Spleen (tissue), 13 donors: ENCODE measurements at regions of chr13 and their contacts with region 1.

Region 1: GRCh38 chr13:27868641-27869435 is 51.0 kb upstream of the PDX1 start:
- DNase-seq: no peak
- H3K4me3 ChIP-seq: no peak overlapping the region
- H3K27ac ChIP-seq: no peak overlapping the region
- H3K4me1 ChIP-seq: no peaks in the 10 kb centered on the region
- H3K27me3 ChIP-seq: peaks cover 0 to 79% (median 6%) of the 10 kb centered on the region in 7 donors
- CTCF ChIP-seq: peak in 7 of 11 experiments; percentile 28 to 44 (median 41)
- POLR2A ChIP-seq: no peak

Region 2: DNA sequence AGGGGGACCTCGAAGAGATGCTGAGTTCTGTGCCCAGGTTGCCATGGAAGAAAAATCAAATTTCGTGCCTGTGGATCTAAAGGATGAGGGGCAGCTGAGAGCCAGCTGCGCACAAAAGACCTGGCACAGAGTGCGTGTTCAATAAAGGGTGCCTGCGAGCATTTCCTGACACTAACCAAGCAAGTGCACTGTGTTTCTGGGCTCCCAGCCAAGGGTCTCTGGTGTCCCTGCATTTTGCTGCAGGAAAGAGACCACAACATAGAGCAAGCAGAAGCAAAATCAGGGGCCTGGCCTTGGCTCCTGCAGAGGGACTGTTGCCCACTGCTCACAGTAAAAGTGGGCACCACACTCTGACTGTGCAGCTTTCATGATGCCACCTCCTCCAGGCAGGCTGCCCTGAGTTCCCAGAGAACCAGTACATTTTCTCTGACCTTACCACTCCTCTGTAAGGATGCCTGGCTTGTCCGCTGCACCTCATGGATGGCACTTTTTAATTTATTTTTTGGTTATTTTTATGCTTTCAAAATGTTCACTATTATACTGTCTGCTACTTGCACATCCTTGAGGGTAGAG is 1037.4 kb before region 1 on chr13:
- intact Hi-C with region 1: no loop called
- DNase-seq: no peak
- H3K4me3 ChIP-seq: no peak overlapping the region
- H3K27ac ChIP-seq: no peak overlapping the region
- H3K4me1 ChIP-seq: no peaks in the 10 kb centered on the region
- H3K27me3 ChIP-seq: peaks cover 0 to 11% (median 0%) of the 10 kb centered on the region in 7 donors
- CTCF ChIP-seq: no peak
- POLR2A ChIP-seq: no peak

Region 3: GRCh38 chr13:27958941-27959815 is 90.3 kb after region 1 on chr13:
- intact Hi-C with region 1: loop called (anchors 5 kb)
- DNase-seq: no peak
- H3K4me3 ChIP-seq: no peak overlapping the region
- H3K27ac ChIP-seq: no peak overlapping the region
- H3K4me1 ChIP-seq: peaks cover 14 to 37% (median 23%) of the 10 kb centered on the region in 6 donors
- H3K27me3 ChIP-seq: peaks cover 3 to 100% (median 92%) of the 10 kb centered on the region in 7 donors
- CTCF ChIP-seq: no peak
- POLR2A ChIP-seq: no peak

Region 4: GRCh38 chr13:29005763-29006120 is 1136.9 kb after region 1 on chr13:
- intact Hi-C with region 1: no loop called
- DNase-seq: no peak
- H3K4me3 ChIP-seq: no peak overlapping the region
- H3K27ac ChIP-seq: no peak overlapping the region
- H3K4me1 ChIP-seq: no peaks in the 10 kb centered on the region
- H3K27me3 ChIP-seq: peaks cover 0 to 4% (median 0%) of the 10 kb centered on the region in 7 donors
- CTCF ChIP-seq: no peak
- POLR2A ChIP-seq: no peak